Dendritic cell treated with granulocyte-macrophage colony-stimulating factor and Interleukin-4, amounts not matched to agents 40 ng/mL and 50 ng/mL, for 4 days (primary cell): ENCODE measurements at regions of chr18 and their contacts with region 1.

Region 1: DNA sequence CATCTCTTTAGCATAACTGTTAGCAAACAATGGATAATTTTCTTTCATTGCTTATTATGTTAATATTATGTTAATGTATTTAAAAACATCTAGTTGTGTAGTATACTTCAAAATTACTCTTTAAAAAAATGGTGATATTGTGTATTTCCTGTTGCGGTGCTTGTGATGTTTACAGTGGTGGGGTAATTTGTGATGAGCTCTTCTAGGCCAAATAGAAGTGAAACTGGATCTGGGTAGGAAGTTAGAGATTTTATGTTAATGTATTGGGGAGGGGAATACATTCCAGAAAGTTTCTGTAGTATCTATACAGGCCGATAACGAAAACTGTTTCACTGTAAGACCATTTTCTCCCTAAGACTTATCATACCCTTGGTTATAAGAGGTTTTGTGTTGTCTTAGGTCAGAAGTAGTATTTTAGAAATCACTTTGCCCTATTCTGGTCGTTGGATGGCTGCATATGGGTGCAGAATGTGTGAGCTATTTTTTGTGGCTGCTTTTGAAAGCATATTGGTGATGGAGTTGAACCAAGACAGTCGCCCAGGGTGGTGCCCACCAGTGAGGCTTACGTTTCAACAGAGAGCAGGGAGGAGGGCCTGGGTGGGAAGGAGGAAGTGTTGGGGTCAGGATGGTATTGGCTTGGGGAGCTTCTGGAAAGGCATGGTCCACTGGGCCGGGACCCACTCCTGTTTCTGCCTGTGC is 5.8 kb downstream of the TSHZ1 start:
- H3K4me3 Mint-ChIP-seq: no peak overlapping the region
- H3K27ac Mint-ChIP-seq: peak overlapping the region; percentile 80
- H3K4me1 Mint-ChIP-seq: peaks cover 45% of the 10 kb centered on the region
- H3K27me3 Mint-ChIP-seq: no peaks in the 10 kb centered on the region

Region 2: DNA sequence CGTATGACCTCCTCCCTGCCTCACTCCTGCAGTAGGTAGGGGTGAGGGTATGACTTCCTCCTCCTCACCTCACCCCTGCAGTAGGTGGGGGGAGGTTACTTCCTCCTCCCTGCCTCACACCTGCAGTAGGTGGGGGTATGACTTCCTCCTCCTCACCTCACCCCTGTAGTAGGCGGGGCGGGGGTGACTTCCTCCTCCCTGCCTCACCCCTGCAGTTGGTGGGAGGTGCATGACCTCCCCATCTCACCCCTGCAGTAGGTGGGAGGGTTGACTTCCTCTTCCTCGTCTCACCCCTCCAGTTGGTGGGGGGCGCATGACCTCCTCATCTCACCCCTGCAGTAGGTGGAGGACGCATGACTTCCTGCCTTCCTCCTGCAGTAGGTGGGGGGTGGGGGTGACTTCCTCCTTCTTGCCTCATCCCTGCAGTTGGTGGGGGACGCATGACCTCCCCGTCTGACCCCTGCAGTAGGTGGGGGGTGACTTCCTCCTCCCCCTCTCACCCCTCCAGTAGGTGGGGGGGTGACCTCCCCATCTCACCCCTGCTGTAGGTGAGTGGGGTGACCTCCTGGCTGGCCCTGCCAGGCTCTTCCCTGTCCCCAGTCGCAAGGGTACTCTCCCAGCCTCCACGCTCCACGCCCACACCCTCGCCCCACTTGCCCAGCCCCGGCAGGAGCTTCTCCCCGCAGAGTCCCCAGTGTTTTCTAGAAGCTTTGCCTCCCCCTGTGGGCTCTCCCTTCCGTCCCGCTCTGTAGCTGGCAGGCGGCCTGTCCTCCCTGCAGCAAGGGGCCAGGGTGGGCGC is 33.5 kb after region 1 on chr18:
- intact Hi-C with region 1: loop called (anchors 5 kb)
- H3K4me3 Mint-ChIP-seq: no peak overlapping the region
- H3K27ac Mint-ChIP-seq: peak overlapping the region; percentile 50
- H3K4me1 Mint-ChIP-seq: peaks cover 43% of the 10 kb centered on the region
- H3K27me3 Mint-ChIP-seq: no peaks in the 10 kb centered on the region

Region 3: DNA sequence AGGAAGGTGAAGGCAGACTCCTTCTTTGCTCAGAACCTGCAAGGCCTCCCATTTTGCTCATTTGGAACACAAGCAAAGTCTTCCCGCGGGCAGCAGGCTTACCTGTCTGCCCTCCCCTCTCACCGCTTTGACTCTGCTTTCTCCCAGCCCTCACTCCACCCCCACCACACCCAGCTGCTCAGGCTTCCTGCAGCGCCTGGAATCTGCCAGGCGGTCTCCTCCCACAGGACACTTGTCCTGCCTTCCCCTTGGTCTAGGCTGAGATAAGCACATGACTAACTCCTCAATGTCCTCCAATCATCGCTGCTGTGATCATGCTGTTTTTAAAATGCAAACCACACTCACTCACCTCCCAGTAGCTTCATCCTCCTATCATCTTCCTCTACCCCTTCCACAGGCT is 848.6 kb after region 1 on chr18:
- intact Hi-C with region 1: no loop called
- H3K4me3 Mint-ChIP-seq: no peak overlapping the region
- H3K27ac Mint-ChIP-seq: no peak overlapping the region
- H3K4me1 Mint-ChIP-seq: no peaks in the 10 kb centered on the region
- H3K27me3 Mint-ChIP-seq: peaks cover 1% of the 10 kb centered on the region